ENCODE measurements at regions of chr4 and their contacts with region 1.

Region 1: DNA sequence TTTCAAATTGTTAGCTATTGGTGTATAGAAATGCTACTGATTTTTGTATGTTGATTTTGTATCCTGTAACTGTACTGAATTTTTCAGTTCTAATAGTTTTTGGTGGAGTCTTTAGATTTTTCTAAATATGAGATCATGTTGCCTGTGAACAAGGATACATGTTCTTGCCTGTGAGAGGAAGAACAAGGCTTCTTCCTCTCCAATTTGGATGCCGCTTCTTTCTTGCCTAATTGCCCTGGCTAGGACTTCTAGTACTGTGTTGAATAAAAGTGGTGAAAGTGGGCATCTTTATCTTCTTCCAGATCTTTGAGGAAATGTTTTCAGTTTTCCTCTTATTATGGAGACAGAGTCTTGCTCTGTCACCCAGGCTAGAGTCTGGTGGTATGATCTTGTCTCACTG is 16.2 kb upstream of the NAP1L5 start:
- DNase-seq: no peak
- H3K4me3 Mint-ChIP-seq: no peak overlapping the region
- H3K27ac Mint-ChIP-seq: no peak overlapping the region
- H3K4me1 Mint-ChIP-seq: peaks cover 10% of the 10 kb centered on the region
- H3K27me3 Mint-ChIP-seq: no peaks in the 10 kb centered on the region

Region 2: GRCh38 chr4:88697588-88698329 is 16.0 kb before region 1 on chr4 and contains the start of gene NAP1L5:
- CTCF ChIA-PET with region 1: no interaction called
- intact Hi-C with region 1: no loop called
- DNase-seq: peak; percentile 74
- H3K4me3 Mint-ChIP-seq: peak within 1 kb of the TSS; percentile 82
- H3K27ac Mint-ChIP-seq: peak within 1 kb of the TSS; percentile 78
- H3K4me1 Mint-ChIP-seq: peaks cover 11% of the 10 kb centered on the region
- H3K27me3 Mint-ChIP-seq: no peaks in the 10 kb centered on the region
- total RNA-seq, gene NAP1L5: 3.5 to 3.9 TPM

Region 3: DNA sequence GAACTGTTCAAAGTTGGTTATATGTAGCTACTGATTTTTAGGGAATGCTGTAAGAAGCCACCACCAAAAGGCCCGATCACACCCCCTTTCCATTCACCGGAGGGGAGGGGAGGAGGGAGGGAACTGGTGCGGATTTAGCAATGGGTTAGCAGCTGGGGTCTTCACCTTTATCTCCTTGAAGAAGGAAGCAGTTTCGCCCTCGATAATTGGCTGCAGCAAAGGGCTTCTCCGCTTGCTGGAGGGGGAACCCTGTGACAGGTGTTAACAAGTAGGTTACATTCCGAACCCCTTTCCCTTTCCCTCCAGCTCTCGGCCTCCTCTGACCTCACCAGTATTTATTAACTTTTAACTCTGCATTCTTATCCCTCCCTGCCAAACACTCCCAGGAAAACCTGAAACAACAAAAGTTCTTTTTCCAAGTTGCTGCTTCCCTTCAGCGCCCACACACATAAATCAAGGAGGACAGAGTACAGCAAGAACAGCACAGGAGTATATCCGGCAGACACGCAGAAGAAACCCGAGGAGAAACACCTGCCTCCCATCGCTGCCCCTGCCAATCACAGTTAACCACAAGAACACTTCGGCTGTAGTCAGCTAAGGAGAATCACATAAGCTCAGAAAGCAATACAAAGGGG is 23.6 kb after region 1 on chr4:
- CTCF ChIA-PET with region 1: no interaction called
- intact Hi-C with region 1: loop called (anchors 2 kb)
- DNase-seq: peak; percentile 70
- H3K4me3 Mint-ChIP-seq: peak overlapping the region; percentile 58
- H3K27ac Mint-ChIP-seq: peak overlapping the region; percentile 9
- H3K4me1 Mint-ChIP-seq: peaks cover 20% of the 10 kb centered on the region
- H3K27me3 Mint-ChIP-seq: no peaks in the 10 kb centered on the region

Region 4: GRCh38 chr4:88750356-88750755 is 36.6 kb after region 1 on chr4:
- CTCF ChIA-PET with region 1: no interaction called
- intact Hi-C with region 1: no loop called
- DNase-seq: no peak
- H3K4me3 Mint-ChIP-seq: no peak overlapping the region
- H3K27ac Mint-ChIP-seq: no peak overlapping the region
- H3K4me1 Mint-ChIP-seq: no peaks in the 10 kb centered on the region
- H3K27me3 Mint-ChIP-seq: no peaks in the 10 kb centered on the region

Measured in activated naive CD4-positive, alpha-beta T cell treated with anti-CD3 and anti-CD28 coated beads for 36 hours (primary cell).